B cell (primary cell): ENCODE measurements at regions of chr20 and their contacts with region 1.

Region 1: DNA sequence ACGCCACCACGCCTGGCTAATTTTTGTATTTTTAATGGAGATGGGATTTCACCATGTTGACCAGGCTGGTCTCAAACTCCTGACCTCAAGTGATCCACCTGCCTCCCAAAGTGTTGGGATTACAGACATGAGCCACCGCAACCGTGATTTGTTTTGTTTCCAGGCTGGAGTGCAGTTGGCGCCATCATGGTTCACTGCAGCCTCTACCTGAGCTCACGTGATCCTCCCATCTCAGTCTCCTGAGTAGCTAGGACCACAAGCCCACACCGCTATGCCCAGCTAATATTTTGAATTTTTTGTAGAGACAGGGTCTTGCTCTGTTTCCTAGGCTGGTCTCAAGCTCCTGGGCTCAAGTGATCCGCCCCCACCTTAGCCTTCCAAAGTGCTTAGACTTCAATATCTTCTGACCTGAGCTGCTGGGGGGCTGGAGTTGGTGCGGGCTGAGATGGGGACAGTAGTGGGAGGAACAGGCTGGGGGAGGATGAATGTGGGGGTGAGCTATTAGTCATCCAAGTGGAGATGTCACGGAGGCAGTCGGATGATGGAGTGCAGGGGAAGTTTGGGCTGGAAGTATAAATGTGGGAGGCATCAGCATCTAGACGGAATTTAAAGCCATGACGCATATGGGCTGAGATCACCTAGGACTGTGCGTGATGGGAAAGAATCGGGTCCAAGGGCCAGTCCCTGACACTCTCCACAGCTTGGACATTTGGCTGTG is 23.1 kb upstream of the ZMYND8 start:
- DNase-seq: no peak
- ATAC-seq: no peak
- H3K4me3 ChIP-seq: no peak overlapping the region
- H3K4me3 Mint-ChIP-seq: no peak overlapping the region
- H3K27ac ChIP-seq: no peak overlapping the region
- H3K27ac Mint-ChIP-seq: no peak overlapping the region
- H3K4me1 ChIP-seq: peaks cover 7 to 10% of the 10 kb centered on the region in 2 donors
- H3K4me1 Mint-ChIP-seq: peaks cover 10% of the 10 kb centered on the region
- H3K27me3 ChIP-seq: no peaks in the 10 kb centered on the region
- H3K27me3 Mint-ChIP-seq: no peaks in the 10 kb centered on the region
- CTCF ChIP-seq: no peak

Region 2: GRCh38 chr20:47146703-47147102 is 232.9 kb before region 1 on chr20:
- CTCF ChIA-PET with region 1: no interaction called
- POLR2A ChIA-PET with region 1: no interaction called
- intact Hi-C with region 1: no loop called
- DNase-seq: no peak
- ATAC-seq: no peak
- H3K4me3 ChIP-seq: no peak overlapping the region
- H3K4me3 Mint-ChIP-seq: no peak overlapping the region
- H3K27ac ChIP-seq: no peak overlapping the region
- H3K27ac Mint-ChIP-seq: no peak overlapping the region
- H3K4me1 ChIP-seq: no peaks in the 10 kb centered on the region
- H3K4me1 Mint-ChIP-seq: no peaks in the 10 kb centered on the region
- H3K27me3 ChIP-seq: peaks cover 0 to 7% (median 1%) of the 10 kb centered on the region in 4 experiments
- H3K27me3 Mint-ChIP-seq: peaks cover 25% of the 10 kb centered on the region
- CTCF ChIP-seq: no peak

Region 3: GRCh38 chr20:47196091-47197081 is 183.2 kb before region 1 on chr20:
- CTCF ChIA-PET with region 1: interaction called, 44 read pairs
- POLR2A ChIA-PET with region 1: no interaction called
- intact Hi-C with region 1: loop called (anchors 1 kb)
- DNase-seq: peak; percentile 81
- ATAC-seq: peak; percentile 82
- H3K4me3 ChIP-seq: peak overlapping the region in 2 of 5 experiments; percentile 12 to 33
- H3K4me3 Mint-ChIP-seq: peak overlapping the region; percentile 16
- H3K27ac ChIP-seq: no peak overlapping the region
- H3K27ac Mint-ChIP-seq: no peak overlapping the region
- H3K4me1 ChIP-seq: peaks cover 3 to 7% of the 10 kb centered on the region in 2 donors
- H3K4me1 Mint-ChIP-seq: peaks cover 5% of the 10 kb centered on the region
- H3K27me3 ChIP-seq: no peaks in the 10 kb centered on the region
- H3K27me3 Mint-ChIP-seq: no peaks in the 10 kb centered on the region
- CTCF ChIP-seq: peak; percentile 100

Region 4: DNA sequence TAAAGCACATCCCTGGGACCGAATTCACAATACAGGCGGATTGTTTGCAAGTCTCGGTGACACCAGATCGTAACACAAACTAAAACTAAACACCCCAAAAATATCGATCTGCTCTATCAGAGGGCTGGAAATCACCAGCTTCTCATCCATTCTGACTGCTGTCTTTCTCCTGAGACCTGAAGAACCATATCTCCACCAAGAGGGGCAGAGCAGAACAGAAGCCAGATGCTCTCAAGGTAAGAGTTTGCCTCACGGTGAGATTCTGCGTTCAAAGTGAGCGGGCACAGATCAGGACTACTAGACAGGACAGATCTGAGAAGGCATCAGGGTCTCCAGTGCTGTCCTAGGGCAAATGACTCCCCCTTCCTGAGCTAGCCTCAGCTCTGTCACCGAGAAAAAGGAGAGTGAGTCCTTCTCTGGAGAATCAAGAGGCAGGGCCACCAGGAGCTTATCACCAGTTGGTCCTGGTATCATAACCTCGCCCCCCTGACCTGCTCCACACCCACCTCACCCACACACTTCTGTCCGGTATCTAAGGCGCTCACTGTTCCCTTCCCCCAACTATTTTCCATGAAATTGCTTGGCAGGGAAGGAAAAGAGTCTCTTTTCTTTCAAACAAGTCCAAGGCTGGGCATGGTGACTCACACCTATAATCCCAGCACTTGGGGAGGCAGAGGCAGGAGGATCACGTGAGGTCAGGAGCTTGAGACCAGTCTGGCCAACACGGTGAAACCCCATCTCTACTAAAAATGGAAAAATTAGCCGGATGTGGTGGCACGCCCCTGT is 100.8 kb before region 1 on chr20:
- CTCF ChIA-PET with region 1: interaction called, 556 read pairs
- POLR2A ChIA-PET with region 1: interaction called, 23 read pairs
- intact Hi-C with region 1: loop called (anchors 1 kb)
- DNase-seq: no peak
- ATAC-seq: no peak
- H3K4me3 ChIP-seq: no peak overlapping the region
- H3K4me3 Mint-ChIP-seq: no peak overlapping the region
- H3K27ac ChIP-seq: peak overlapping the region in 1 of 2 donors; percentile 13
- H3K27ac Mint-ChIP-seq: peak overlapping the region; percentile 27
- H3K4me1 ChIP-seq: no peaks in the 10 kb centered on the region
- H3K4me1 Mint-ChIP-seq: peaks cover 8% of the 10 kb centered on the region
- H3K27me3 ChIP-seq: no peaks in the 10 kb centered on the region
- H3K27me3 Mint-ChIP-seq: no peaks in the 10 kb centered on the region
- CTCF ChIP-seq: no peak

Region 5: DNA sequence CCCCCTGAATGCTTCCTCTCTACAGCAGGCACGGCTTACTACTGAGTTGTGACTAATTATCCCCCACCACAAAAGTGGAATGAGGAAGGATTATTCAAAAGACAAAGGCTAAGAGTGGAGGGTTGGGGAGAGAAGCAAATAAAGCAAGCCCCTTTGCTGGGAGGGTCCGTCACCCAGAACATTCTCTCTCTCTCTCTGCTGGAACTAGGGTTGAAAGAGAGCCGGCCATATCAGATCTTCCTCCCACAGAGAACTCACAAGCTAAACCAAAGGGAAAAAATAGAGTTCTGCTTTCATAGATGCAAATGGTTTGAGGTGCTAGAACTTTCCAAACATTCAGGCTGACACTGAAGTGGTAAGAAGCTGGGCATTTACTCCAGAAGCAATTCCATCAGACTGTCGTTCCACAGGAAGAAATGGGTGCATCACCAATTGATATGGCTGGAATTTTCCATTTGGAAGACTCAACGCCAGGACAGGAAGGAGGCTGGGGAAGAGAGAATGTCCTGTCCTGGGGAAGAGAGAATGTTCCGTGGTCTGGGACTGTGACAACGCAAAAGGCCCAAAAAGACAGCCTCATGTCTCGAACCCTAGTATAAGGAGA is 31.0 kb before region 1 on chr20:
- CTCF ChIA-PET with region 1: interaction called, 56 read pairs
- POLR2A ChIA-PET with region 1: interaction called, 5 read pairs
- intact Hi-C with region 1: loop called (anchors 2 kb)
- DNase-seq: peak; percentile 35
- ATAC-seq: peak; percentile 19
- H3K4me3 ChIP-seq: peak overlapping the region in 2 of 5 experiments; percentile 11 to 20
- H3K4me3 Mint-ChIP-seq: no peak overlapping the region
- H3K27ac ChIP-seq: peak overlapping the region; percentile 62 to 90
- H3K27ac Mint-ChIP-seq: no peak overlapping the region
- H3K4me1 ChIP-seq: peaks cover 72 to 77% of the 10 kb centered on the region in 2 donors
- H3K4me1 Mint-ChIP-seq: peaks cover 7% of the 10 kb centered on the region
- H3K27me3 ChIP-seq: no peaks in the 10 kb centered on the region
- H3K27me3 Mint-ChIP-seq: no peaks in the 10 kb centered on the region
- CTCF ChIP-seq: no peak

Region 6: DNA sequence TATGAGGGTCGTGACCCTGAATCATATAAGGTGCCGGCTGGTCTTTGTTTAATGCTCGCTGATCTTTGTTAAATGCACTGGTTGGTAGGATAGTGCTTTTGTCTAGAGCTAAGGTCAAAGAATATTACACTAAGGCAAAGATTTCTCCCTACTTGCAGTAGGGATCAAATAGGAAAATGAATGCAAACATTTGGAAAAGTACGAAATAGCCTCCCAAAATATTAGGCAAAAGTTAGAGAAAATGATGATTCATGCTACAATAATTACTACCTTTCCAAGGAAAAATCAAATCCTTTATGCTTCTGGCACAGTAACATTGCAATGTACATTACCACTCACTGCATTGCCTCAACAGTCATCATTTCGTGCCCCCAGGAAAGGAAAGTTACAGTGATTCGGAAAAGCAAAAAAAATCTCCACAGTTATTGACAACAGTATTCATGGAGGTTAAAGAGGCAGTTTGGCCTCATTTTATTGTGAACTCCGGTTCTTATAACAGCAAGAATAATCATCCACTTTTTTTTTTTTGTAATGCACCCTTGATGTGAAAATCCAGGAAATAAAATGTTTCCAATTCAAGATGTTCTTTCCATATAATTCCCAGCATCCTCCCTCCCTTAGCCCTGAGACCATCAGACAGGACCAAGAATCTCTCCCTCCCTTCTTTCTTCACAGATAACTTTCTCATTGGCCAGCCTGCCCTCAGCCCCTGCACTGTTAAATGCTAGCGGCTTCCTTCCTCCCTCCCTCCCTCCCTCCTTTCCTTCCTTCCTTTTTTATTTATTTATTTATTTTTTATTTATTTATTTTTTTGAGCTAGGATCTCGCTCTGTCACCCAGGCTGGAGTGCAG is 38.7 kb after region 1 on chr20:
- CTCF ChIA-PET with region 1: interaction called, 89 read pairs
- POLR2A ChIA-PET with region 1: interaction called, 9 read pairs
- intact Hi-C with region 1: loop called (anchors 5 kb)
- DNase-seq: no peak
- ATAC-seq: no peak
- H3K4me3 ChIP-seq: no peak overlapping the region
- H3K4me3 Mint-ChIP-seq: no peak overlapping the region
- H3K27ac ChIP-seq: peak overlapping the region; percentile 97 to 99
- H3K27ac Mint-ChIP-seq: peak overlapping the region; percentile 99
- H3K4me1 ChIP-seq: peaks cover 59 to 73% of the 10 kb centered on the region in 2 donors
- H3K4me1 Mint-ChIP-seq: peaks cover 67% of the 10 kb centered on the region
- H3K27me3 ChIP-seq: no peaks in the 10 kb centered on the region
- H3K27me3 Mint-ChIP-seq: no peaks in the 10 kb centered on the region
- CTCF ChIP-seq: no peak

Region 7: DNA sequence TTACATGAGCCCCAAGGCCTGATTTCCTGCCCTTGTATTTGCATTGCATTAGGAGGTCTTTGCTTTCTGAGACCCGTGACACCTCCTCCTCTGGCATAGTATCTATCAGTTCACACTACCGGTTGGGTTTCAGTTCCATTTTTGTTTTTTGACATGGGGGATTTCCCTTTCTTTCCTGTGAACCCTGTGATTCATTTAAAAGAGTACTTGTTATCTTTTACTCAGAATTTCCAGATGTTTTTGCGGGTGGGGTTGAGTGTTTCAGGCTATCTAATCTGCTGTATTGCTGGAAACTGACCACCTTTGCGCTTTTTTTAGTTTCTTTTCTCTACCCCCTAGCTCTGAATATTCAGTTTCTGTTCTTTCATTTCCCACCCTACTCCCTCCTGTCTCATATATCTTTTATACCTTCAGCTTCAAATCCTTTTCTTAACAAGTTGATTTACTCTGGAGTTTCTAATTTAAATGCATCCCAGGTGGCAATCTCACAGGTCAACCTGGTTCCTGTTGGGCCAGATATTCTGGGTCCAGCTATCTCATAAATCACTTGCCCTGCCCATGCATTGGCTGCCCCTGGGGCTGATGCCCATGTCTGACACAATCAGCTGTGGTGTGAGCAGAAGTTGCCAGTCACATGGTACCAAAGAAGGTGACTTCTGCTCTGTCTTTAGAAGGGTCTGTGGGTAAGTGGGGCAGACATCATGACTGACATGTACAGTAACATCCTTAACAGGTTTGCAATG is 107.8 kb after region 1 on chr20:
- CTCF ChIA-PET with region 1: interaction called, 34 read pairs
- POLR2A ChIA-PET with region 1: interaction called, 4 read pairs
- intact Hi-C with region 1: no loop called
- DNase-seq: peak; percentile 92
- ATAC-seq: peak; percentile 78
- H3K4me3 ChIP-seq: peak overlapping the region in 3 of 5 experiments; percentile 29 to 59 (median 38)
- H3K4me3 Mint-ChIP-seq: peak overlapping the region; percentile 70
- H3K27ac ChIP-seq: peak overlapping the region; percentile 85 to 86
- H3K27ac Mint-ChIP-seq: peak overlapping the region; percentile 89
- H3K4me1 ChIP-seq: peaks cover 47 to 68% of the 10 kb centered on the region in 2 donors
- H3K4me1 Mint-ChIP-seq: peaks cover 57% of the 10 kb centered on the region
- H3K27me3 ChIP-seq: no peaks in the 10 kb centered on the region
- H3K27me3 Mint-ChIP-seq: no peaks in the 10 kb centered on the region
- CTCF ChIP-seq: no peak

Region 8: DNA sequence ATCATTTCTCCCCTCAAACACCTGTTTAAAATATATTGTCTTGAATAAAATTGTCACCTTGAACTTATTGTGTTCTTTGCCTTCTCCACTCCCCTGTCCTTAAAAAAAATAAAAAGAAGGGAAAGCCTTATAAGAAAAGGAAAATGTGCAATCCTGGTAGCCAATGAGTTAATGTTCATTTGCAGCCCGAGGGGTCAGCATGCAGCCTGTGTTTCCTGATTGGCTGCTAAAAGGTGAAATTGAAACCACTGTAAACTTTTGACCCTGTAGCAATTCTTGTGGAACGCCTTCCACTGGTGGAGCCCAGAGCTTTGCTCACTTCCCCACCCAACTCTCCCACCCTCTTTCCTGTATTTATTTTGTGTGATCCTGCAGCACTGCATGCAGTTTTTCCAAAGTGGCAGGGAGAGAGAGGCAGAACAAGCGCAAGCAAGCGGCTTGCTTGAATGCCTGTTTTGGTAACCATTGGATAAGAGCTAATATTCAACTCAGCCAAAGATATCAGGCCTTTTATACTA is 197.0 kb after region 1 on chr20:
- CTCF ChIA-PET with region 1: interaction called, 11 read pairs
- POLR2A ChIA-PET with region 1: no interaction called
- intact Hi-C with region 1: no loop called
- DNase-seq: peak; percentile 60
- ATAC-seq: peak; percentile 63
- H3K4me3 ChIP-seq: peak overlapping the region in 3 of 5 experiments; percentile 2 to 50 (median 15)
- H3K4me3 Mint-ChIP-seq: peak overlapping the region; percentile 76
- H3K27ac ChIP-seq: peak overlapping the region; percentile 46 to 58
- H3K27ac Mint-ChIP-seq: peak overlapping the region; percentile 68
- H3K4me1 ChIP-seq: peaks cover 77 to 91% of the 10 kb centered on the region in 2 donors
- H3K4me1 Mint-ChIP-seq: peaks cover 88% of the 10 kb centered on the region
- H3K27me3 ChIP-seq: no peaks in the 10 kb centered on the region
- H3K27me3 Mint-ChIP-seq: no peaks in the 10 kb centered on the region
- CTCF ChIP-seq: no peak

Region 9: DNA sequence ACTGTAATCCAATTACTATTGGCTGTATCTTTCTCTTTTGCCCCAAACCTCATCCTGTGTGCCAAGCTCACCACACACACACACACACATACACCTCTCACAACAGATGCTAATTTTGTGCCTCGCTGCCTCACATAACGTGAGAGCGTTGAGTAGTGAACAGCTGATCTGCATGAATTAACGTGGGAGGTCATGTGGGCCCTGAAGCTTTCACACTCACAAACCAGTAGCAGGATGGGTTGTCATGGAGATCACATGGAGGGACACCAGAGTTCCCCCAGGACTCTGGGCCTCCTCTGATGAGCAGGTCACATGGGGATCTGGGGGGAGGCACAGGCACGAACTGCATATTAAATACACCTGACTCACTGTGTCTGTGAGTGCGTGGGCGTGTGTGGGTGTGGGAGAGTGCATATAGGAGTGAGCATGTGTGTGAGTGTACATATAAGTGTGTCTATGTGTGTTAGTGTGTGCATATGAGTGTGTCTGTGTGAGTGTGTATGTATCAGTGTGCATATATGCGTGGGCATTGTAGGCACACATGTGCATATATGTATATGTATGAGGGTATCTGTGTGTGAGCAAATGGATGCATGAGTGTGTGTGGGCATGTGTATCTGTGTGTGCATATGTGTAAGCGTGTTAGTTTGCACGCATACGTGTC is 468.4 kb after region 1 on chr20:
- CTCF ChIA-PET with region 1: no interaction called
- POLR2A ChIA-PET with region 1: no interaction called
- intact Hi-C with region 1: no loop called
- DNase-seq: peak; percentile 41
- ATAC-seq: peak; percentile 47
- H3K4me3 ChIP-seq: no peak overlapping the region
- H3K4me3 Mint-ChIP-seq: no peak overlapping the region
- H3K27ac ChIP-seq: no peak overlapping the region
- H3K27ac Mint-ChIP-seq: no peak overlapping the region
- H3K4me1 ChIP-seq: no peaks in the 10 kb centered on the region
- H3K4me1 Mint-ChIP-seq: peaks cover 11% of the 10 kb centered on the region
- H3K27me3 ChIP-seq: peaks cover 0 to 7% (median 2%) of the 10 kb centered on the region in 4 experiments
- H3K27me3 Mint-ChIP-seq: peaks cover 29% of the 10 kb centered on the region
- CTCF ChIP-seq: no peak